ENCODE measurements at regions of chr3 and their contacts with region 1.

Region 1: DNA sequence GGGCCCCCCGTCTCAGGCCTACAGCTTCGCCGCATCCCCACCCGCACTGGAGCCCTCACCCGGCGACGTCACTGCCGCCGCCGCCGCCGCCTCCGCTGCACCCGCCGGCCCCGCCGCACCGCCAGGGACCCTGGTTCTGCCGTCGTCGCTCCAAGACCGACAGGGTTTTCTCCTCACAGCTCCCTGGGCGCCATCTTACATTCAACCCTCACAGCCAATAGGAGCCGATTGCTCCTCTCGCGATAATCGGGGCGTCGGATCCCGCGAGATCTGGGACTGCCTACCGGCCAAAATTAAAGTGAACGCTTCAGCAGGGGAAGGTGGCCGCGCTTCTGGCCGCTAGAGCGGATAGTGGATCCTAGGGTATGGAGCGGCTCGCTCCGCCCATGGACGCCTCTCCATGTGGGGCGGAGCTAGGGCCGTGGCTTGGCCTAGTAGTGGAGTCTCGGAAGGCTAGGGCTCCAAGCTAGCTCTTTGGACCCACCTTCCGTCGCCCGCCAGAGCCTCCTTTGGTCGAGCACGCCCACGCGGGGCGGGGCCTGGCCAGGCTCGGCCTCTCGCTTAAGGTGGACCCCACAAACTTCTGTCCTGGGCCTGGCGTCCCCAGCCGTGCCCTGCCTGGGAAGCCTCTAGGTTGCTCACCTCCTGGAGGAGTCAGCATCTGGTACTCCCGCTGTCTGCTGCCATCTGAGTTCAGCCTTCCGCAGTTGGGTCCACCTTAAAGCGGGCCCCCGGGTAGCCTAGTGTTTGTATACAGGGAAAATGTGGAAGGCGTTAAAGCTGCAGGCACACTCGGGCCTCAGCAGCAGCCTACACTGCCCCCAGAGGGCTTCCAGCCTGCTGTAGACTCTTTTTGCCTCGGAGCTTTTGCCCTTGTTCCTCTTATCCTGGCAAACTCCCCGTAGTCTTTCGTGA is at the start of gene QRICH1:
- DNase-seq: peak; percentile 99
- H3K4me3 Mint-ChIP-seq: peak within 1 kb of the TSS; percentile 96
- H3K27ac Mint-ChIP-seq: peak within 1 kb of the TSS; percentile 97
- H3K4me1 Mint-ChIP-seq: peaks cover 17% of the 10 kb centered on the region
- H3K27me3 Mint-ChIP-seq: no peaks in the 10 kb centered on the region
- total RNA-seq, gene QRICH1: 138 and 152 TPM in 2 replicates

Region 2: DNA sequence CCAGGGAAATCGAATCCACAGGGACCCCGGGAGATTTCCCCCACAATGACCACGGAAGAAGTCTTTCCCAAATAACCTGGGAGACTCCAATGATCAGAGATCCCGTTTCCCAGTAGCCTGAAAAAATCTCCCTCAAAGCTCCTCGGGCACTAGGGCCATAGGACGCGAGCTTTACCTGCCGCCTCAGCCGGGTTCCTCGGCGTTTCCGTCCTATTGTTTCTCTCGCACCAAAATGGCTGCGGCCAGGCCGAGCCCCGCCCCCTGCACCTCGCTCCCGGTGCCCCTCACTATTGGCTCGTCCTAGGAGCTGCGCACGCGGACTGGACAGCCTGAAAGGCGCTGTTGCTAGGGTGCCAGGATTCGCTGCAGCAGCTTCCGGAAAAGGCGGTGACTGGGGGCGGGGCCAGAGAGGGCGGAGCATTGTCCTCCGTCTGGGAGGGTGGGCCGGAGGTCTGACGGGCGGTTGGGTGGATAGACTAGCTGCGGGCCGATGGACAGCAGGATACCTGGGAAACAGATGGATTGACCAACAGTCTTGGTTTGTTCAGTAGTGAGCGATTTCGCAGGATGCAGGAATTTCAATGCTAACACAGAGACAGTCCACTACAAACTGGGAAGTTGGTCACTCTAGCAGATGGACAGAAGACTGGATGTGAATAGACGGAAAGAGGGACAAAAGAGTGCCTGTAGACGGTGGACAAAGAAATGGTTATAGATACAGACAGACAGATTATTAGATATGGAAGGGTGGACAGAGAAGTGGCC is 376.9 kb before region 1 on chr3 and contains the start of gene IP6K2:
- intact Hi-C with region 1: loop called (anchors 5 kb)
- DNase-seq: peak; percentile 100
- H3K4me3 Mint-ChIP-seq: peak within 1 kb of the TSS; percentile 98
- H3K27ac Mint-ChIP-seq: peak within 1 kb of the TSS; percentile 98
- H3K4me1 Mint-ChIP-seq: peaks cover 29% of the 10 kb centered on the region
- H3K27me3 Mint-ChIP-seq: peaks cover 22% of the 10 kb centered on the region
- total RNA-seq, gene IP6K2: 57.9 and 58.4 TPM in 2 replicates

Region 3: DNA sequence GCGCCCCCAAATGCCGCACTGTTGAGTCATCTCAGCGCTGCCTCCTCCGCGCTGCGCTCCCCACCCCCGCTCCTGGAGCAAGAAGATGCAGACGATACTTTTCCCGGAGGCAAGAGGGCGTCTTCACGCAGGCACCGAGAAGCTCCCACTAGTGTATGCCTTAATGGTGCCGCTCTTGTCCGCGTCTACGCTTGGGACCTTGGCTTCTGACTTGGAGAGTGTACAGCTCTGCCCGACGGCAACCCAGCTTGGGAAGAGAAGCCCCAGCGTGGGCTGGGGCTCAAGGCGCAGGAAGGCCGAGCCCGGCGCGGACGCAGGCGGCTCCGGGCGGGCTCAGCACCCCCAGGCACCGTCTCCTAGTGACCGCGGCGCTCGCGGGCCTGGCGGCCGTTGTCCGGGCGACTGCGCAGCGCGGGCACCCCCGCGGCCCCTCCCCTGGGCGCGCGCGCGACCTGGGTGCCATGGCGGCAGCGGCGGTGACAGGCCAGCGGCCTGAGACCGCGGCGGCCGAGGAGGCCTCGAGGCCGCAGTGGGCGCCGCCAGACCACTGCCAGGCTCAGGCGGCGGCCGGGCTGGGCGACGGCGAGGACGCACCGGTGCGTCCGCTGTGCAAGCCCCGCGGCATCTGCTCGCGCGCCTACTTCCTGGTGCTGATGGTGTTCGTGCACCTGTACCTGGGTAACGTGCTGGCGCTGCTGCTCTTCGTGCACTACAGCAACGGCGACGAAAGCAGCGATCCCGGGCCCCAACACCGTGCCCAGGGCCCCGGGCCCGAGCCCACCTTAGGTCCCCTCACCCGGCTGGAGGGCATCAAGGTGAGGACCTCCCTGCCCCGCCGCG is 104.1 kb before region 1 on chr3 and contains the start of gene P4HTM:
- intact Hi-C with region 1: loop called (anchors 1 kb)
- DNase-seq: peak; percentile 91
- H3K4me3 Mint-ChIP-seq: peak within 1 kb of the TSS; percentile 96
- H3K27ac Mint-ChIP-seq: peak within 1 kb of the TSS; percentile 95
- H3K4me1 Mint-ChIP-seq: peaks cover 36% of the 10 kb centered on the region
- H3K27me3 Mint-ChIP-seq: no peaks in the 10 kb centered on the region
- total RNA-seq, gene P4HTM: 33.9 and 38.3 TPM in 2 replicates

Region 4: GRCh38 chr3:49028673-49029562 is 65.2 kb before region 1 on chr3 and contains the start of gene IMPDH2:
- intact Hi-C with region 1: loop called (anchors 2 kb)
- DNase-seq: peak; percentile 99
- H3K4me3 Mint-ChIP-seq: peak within 1 kb of the TSS; percentile 98
- H3K27ac Mint-ChIP-seq: peak within 1 kb of the TSS; percentile 95
- H3K4me1 Mint-ChIP-seq: peaks cover 34% of the 10 kb centered on the region
- H3K27me3 Mint-ChIP-seq: no peaks in the 10 kb centered on the region
- total RNA-seq, gene IMPDH2: 490 and 496 TPM in 2 replicates

Region 5: DNA sequence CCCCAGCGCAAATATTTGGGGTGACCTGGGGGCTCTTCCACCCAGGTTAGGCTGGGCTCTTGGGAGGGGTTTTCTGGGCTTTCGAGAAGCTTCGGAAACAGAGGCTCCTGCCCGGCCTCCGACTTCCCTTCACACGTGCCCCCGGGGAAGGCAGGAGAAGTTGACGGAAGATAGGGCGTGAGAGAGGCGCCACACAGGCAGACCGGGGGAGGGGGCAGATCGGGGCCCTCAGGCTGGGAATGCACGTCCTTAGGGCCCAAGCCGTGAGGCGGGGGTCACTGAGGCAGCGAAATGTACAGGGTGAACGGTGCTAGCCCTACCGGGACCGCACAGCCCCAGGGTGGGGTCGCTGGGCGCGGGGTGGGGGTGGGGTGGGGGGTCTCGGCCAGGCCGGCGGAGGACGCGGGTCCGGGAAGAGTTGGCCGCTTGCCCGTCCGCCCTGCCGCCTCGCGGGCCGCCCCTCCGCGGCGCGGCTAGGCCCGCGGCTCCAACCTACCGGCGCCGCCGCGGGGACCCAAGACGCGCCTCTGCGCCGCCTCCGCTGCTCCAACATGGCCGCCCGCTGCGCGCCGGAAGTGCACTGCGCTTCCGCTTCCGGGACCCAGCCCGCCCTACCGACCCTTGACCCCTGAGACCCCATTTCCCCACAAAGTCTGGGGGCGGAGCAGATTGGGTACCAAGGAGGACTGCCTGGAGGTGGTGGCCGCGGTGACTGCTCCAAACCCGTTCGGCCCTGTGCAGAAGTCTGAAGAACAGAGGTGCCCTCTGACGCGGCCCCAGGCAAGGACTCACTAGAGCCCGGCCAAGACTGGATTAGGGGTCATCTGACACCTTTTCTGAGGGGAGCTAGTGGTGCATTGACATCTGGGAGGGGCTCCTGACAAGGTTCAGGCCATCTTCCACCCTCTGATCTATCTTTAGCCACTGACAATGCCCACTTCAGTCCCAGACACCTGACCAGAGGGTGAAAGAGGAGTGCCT is 72.0 kb after region 1 on chr3 and contains the start of gene CCDC71:
- intact Hi-C with region 1: loop called (anchors 2 kb)
- DNase-seq: peak; percentile 94
- H3K4me3 Mint-ChIP-seq: peak within 1 kb of the TSS; percentile 95
- H3K27ac Mint-ChIP-seq: peak within 1 kb of the TSS; percentile 92
- H3K4me1 Mint-ChIP-seq: peaks cover 24% of the 10 kb centered on the region
- H3K27me3 Mint-ChIP-seq: no peaks in the 10 kb centered on the region
- total RNA-seq, gene CCDC71: 25.7 and 26.7 TPM in 2 replicates

Region 6: DNA sequence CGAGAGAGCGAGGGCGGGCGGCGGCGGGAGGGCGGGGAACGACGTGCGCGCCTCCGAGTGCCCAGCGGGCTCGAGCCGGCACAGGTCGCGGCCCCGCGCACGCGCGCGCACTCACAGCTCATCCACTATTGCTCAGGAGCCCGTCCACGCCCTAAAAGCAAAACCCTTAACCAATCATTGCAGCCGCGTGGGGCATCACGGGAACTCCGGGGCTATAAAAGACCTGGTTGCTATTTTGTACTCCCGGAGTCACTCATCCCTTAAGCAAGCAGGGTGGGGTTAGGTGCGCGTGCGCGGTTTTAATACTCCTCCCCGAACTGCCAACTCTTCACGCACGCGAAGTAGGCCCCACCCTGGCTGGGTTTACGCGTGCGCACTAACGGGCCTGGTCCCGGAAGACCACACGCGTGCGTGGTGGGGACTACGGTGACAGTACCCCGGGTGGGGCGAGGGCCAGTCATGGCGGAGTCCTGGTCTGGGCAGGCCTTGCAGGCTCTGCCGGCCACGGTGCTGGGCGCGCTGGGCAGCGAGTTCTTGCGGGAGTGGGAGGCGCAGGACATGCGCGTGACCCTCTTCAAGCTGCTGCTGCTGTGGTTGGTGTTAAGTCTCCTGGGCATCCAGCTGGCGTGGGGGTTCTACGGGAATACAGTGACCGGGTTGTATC is 318.0 kb after region 1 on chr3 and contains the starts of genes RHOA and TCTA:
- intact Hi-C with region 1: loop called (anchors 5 kb)
- DNase-seq: peak; percentile 100
- H3K4me3 Mint-ChIP-seq: peak within 1 kb of the TSS; percentile 94
- H3K27ac Mint-ChIP-seq: peak within 1 kb of the TSS; percentile 95
- H3K4me1 Mint-ChIP-seq: peaks cover 59% of the 10 kb centered on the region
- H3K27me3 Mint-ChIP-seq: peaks cover 2% of the 10 kb centered on the region
- total RNA-seq, gene RHOA: 381 and 391 TPM in 2 replicates
- total RNA-seq, gene TCTA: 18.7 and 21.2 TPM in 2 replicates